ENCODE measurements at regions of chr3 and their contacts with region 1.

Region 1: DNA sequence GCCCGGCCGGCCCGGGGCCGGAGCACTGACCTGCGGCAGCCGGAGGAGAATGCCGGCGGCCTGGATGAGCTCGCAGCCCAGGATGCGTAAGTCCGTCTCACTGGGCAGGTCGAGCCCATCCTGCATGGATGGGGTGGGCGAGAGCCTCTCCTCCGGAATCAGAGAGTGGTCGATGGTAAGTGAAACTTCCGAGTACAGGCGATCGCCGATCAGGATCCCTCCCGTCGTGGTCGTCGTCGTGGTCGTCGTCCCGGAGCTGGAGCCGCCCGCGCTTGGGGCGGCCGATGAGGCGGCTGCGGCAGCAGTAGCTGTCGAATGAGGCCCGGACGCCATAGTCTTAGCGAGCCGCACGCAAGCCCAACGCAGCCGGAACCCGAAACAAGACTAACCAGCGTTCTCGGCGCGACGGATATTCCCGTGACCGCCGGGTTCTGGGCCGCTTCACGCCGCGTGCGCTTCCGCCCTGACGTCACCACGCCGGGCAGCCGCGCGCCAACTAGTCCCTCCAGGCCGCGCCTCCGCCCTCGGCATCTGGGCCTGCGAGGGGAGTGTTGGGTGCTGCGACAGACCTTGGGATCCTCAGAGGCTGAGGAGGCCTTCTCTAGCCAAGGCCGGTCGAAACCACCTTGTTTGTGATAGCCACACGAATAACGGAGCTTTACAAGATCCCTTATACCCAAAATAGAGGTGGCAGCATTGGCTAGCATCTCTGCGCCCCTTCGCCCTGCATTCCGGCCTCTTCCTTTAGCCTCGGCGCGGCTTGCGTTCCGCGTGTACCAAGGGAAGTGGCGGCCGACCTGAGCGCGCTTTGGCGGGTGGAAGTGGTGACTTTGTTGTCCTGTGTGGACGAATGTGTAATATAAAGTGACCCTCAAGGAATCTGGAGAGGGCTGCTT is at the start of gene CCNL1:
- DNase-seq: peak; percentile 98
- ATAC-seq: peak; percentile 81
- H3K4me3 Mint-ChIP-seq: peak within 1 kb of the TSS; percentile 83
- H3K27ac Mint-ChIP-seq: peak within 1 kb of the TSS; percentile 85
- H3K4me1 Mint-ChIP-seq: peaks cover 44% of the 10 kb centered on the region
- H3K27me3 Mint-ChIP-seq: no peaks in the 10 kb centered on the region
- total RNA-seq, gene CCNL1: 276 to 280 TPM

Region 2: GRCh38 chr3:156674046-156674910 is 485.7 kb before region 1 on chr3 and contains the start of gene TIPARP:
- POLR2A ChIA-PET with region 1: interaction called, 13 read pairs
- DNase-seq: peak; percentile 100
- ATAC-seq: peak; percentile 80
- H3K4me3 Mint-ChIP-seq: peak within 1 kb of the TSS; percentile 92
- H3K27ac Mint-ChIP-seq: peak within 1 kb of the TSS; percentile 96
- H3K4me1 Mint-ChIP-seq: peaks cover 42% of the 10 kb centered on the region
- H3K27me3 Mint-ChIP-seq: no peaks in the 10 kb centered on the region
- total RNA-seq, gene TIPARP: 50.9 to 59.9 TPM

Region 3: DNA sequence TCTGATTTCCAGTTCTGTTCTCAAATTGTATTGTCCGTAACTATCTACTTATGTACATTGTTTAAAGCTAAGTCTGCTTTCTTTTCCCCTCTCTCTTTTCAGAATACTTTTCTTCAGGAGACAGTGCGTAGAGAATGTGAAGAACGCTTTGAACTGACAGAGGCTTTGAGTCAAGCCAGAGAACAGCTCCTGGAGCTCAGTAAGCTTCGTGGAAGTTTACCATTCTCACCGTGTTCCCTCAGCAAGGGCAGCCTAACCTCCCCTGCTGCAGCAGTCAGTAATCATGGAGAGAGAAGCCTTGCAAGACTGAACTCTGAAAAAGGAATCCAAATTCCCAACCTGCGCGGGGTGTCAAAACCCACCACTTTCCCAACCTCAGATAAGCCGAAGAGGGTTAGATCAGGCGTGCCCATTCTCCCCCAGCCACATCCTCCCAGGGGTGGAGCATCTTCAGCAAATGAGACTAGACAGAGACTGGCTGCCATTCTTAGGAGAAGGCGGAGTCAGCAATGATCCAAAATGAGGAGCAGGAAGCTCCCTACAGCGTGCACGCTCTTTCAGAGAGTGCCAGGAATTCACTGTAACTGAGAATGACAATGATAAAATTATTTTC is 114.7 kb before region 1 on chr3:
- POLR2A ChIA-PET with region 1: no interaction called
- DNase-seq: no peak
- ATAC-seq: no peak
- H3K4me3 Mint-ChIP-seq: no peak overlapping the region
- H3K27ac Mint-ChIP-seq: no peak overlapping the region
- H3K4me1 Mint-ChIP-seq: no peaks in the 10 kb centered on the region
- H3K27me3 Mint-ChIP-seq: peaks cover 17% of the 10 kb centered on the region

Region 4: GRCh38 chr3:157130467-157131251 is 29.4 kb before region 1 on chr3:
- POLR2A ChIA-PET with region 1: interaction called, 11 read pairs
- DNase-seq: peak; percentile 66
- ATAC-seq: peak; percentile 41
- H3K4me3 Mint-ChIP-seq: peak overlapping the region; percentile 69
- H3K27ac Mint-ChIP-seq: peak overlapping the region; percentile 96
- H3K4me1 Mint-ChIP-seq: peaks cover 72% of the 10 kb centered on the region
- H3K27me3 Mint-ChIP-seq: no peaks in the 10 kb centered on the region

Region 5: GRCh38 chr3:157174649-157175498 is 14.9 kb after region 1 on chr3:
- POLR2A ChIA-PET with region 1: interaction called, 527 read pairs
- DNase-seq: peak; percentile 96
- ATAC-seq: peak; percentile 95
- H3K4me3 Mint-ChIP-seq: peak overlapping the region; percentile 98
- H3K27ac Mint-ChIP-seq: peak overlapping the region; percentile 96
- H3K4me1 Mint-ChIP-seq: peaks cover 21% of the 10 kb centered on the region
- H3K27me3 Mint-ChIP-seq: no peaks in the 10 kb centered on the region

Region 6: DNA sequence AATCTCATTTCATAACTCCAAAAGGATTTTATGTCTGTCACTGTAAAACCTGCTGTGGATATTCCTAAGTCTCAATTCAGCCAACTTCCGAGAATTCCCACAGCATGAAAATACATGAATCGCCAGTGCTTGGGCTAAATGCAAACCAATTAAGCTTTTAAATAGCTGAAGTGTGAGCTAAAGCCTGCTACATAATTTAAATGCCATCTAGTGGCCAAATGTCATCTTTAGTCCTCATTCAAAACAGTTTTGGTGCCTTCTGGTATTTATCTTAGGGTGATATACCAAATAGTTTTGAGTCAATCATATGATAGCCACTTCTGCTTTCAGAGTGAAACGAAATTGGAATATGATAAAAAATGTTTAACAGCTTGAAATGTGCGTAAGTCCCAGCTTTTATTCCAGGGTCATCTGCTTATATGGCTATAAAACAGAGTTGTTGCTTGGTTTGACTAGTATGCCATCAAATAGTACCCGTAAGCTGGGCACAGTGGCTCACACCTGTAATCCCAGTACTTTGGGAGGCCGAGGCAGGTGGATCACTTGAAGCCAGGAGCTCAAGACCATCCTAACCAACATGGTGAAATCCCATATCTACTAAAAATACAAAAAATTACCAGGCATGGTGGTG is 41.8 kb after region 1 on chr3:
- POLR2A ChIA-PET with region 1: no interaction called
- DNase-seq: no peak
- ATAC-seq: no peak
- H3K4me3 Mint-ChIP-seq: no peak overlapping the region
- H3K27ac Mint-ChIP-seq: no peak overlapping the region
- H3K4me1 Mint-ChIP-seq: peaks cover 2% of the 10 kb centered on the region
- H3K27me3 Mint-ChIP-seq: no peaks in the 10 kb centered on the region

Measured in activated naive CD8-positive, alpha-beta T cell treated with anti-CD3 and anti-CD28 coated beads, Interleukin-2, amount 10 ng/mL, durations not matched to agents 7 days and 5 days (primary cell).